ENCODE measurements at regions of chr17 and their contacts with region 1.

Region 1: GRCh38 chr17:44324571-44325275 is at the start of gene SLC25A39:
- DNase-seq: peak; percentile 94 to 96 (median 96)
- ATAC-seq: peak; percentile 89
- H3K4me3 ChIP-seq: peak within 1 kb of the TSS; percentile 60 to 92
- H3K27ac ChIP-seq: peak within 1 kb of the TSS; percentile 91 to 96 (median 93)
- H3K4me1 ChIP-seq: peaks cover 33% of the 10 kb centered on the region
- H3K27me3 ChIP-seq: no peaks in the 10 kb centered on the region
- CTCF ChIP-seq: peak in 2 of 7 experiments; percentile 13 to 37
- POLR2A ChIP-seq: peak; percentile 67 to 78 (median 67)
- total RNA-seq, gene SLC25A39: 72.6 to 154 TPM

Region 2: GRCh38 chr17:44218344-44219107 is 106.2 kb before region 1 on chr17:
- intact Hi-C with region 1: loop called (anchors 5 kb)
- DNase-seq: peak; percentile 88 to 90 (median 88)
- ATAC-seq: peak; percentile 71
- H3K4me3 ChIP-seq: peak overlapping the region; percentile 15 to 33
- H3K27ac ChIP-seq: peak overlapping the region; percentile 94 to 99 (median 99)
- H3K4me1 ChIP-seq: peaks cover 35% of the 10 kb centered on the region
- H3K27me3 ChIP-seq: no peaks in the 10 kb centered on the region
- CTCF ChIP-seq: peak; percentile 47 to 61 (median 56)
- POLR2A ChIP-seq: peak in 1 of 3 donors; percentile 46

Region 3: GRCh38 chr17:44758414-44759085 is 433.8 kb after region 1 on chr17 and contains the start of gene ADAM11:
- intact Hi-C with region 1: no loop called
- DNase-seq: no peak
- ATAC-seq: peak; percentile 16
- H3K4me3 ChIP-seq: no peak within 1 kb of the TSS
- H3K27ac ChIP-seq: no peak within 1 kb of the TSS
- H3K4me1 ChIP-seq: peaks cover 12% of the 10 kb centered on the region
- H3K27me3 ChIP-seq: peaks cover 0 to 19% of the 10 kb centered on the region in 2 donors
- CTCF ChIP-seq: no peak
- POLR2A ChIP-seq: no peak
- total RNA-seq, gene ADAM11: under 0.01 TPM